ENCODE measurements at regions of chr19 and their contacts with region 1.

Region 1: DNA sequence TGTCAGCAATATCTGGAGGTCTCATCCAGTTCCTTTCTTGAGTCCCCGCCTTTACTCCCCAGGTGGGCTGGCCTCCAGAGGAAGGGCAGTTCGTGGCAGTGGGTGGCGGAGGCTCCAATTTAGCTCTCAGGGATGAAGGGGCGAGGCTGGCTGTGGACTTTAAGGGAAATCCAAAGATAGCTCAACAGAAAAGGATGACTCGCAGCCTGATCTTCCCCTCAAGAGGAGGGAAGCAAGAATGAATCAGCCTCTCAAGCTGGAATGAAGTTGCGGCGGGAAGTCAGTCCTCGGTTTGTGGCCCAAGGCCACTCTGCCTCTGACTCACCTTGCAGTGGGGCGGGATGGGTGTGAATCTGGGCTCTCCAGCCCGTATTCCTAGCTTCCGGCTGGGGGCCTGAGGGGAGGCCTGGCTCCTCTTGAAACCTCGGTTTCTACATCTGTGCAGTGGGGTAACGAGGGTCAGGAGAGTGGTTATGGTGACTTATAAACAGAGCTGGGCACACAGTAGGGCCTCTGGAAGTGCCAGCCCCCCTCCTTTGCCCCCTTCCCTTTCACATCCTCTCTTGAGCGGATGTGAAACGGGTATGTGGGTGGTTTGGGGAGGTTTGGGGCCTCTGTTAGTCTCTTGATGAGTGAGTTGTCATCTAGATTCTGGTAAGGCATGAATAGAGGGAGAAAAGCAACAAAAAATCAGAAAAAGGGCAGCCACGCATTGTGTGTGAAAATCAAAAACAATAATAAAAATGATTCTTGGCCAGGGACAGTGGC is 10.5 kb upstream of the SMG9 start:
- DNase-seq: peak; percentile 31 to 85 (median 60)
- H3K4me3 ChIP-seq: peak overlapping the region; percentile 27
- H3K4me3 Mint-ChIP-seq: peak overlapping the region; percentile 12 to 76 (median 57)
- H3K27ac ChIP-seq: peak overlapping the region; percentile 57
- H3K27ac Mint-ChIP-seq: peak overlapping the region; percentile 84 to 99 (median 90)
- H3K4me1 ChIP-seq: peaks cover 35% of the 10 kb centered on the region
- H3K4me1 Mint-ChIP-seq: peaks cover 35 to 42% (median 36%) of the 10 kb centered on the region in 3 donors
- H3K27me3 ChIP-seq: no peaks in the 10 kb centered on the region
- H3K27me3 Mint-ChIP-seq: peaks cover 0 to 3% of the 10 kb centered on the region in 2 donors

Region 2: DNA sequence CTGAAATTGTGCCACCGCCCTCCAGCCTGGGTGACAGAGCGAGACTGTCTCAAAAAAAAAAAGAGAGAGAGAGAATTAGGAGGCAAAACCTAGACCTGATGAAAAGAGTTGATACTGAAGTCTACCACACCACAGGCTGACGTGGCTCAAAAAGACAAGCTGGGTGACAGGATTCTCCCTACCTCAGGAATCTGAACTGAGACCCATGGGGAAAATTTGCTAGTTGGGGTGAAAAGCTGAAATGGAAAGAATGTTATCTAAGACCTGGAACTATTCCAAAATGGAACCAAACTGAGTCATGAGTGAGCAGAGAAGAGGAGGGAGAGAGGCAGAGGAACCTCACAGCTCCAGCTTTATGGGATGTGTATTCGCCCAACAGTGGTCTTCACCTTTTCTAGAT is 22.3 kb before region 1 on chr19:
- CTCF ChIA-PET with region 1: interaction called, 14 read pairs
- POLR2A ChIA-PET with region 1: no interaction called
- DNase-seq: no peak
- H3K4me3 ChIP-seq: no peak overlapping the region
- H3K4me3 Mint-ChIP-seq: no peak overlapping the region
- H3K27ac ChIP-seq: no peak overlapping the region
- H3K27ac Mint-ChIP-seq: peak overlapping the region in 2 of 8 donors; percentile 60 to 63
- H3K4me1 ChIP-seq: no peaks in the 10 kb centered on the region
- H3K4me1 Mint-ChIP-seq: peaks cover 19 to 26% (median 24%) of the 10 kb centered on the region in 3 donors
- H3K27me3 ChIP-seq: no peaks in the 10 kb centered on the region
- H3K27me3 Mint-ChIP-seq: peaks cover 0 to 2% of the 10 kb centered on the region in 2 donors

Region 3: DNA sequence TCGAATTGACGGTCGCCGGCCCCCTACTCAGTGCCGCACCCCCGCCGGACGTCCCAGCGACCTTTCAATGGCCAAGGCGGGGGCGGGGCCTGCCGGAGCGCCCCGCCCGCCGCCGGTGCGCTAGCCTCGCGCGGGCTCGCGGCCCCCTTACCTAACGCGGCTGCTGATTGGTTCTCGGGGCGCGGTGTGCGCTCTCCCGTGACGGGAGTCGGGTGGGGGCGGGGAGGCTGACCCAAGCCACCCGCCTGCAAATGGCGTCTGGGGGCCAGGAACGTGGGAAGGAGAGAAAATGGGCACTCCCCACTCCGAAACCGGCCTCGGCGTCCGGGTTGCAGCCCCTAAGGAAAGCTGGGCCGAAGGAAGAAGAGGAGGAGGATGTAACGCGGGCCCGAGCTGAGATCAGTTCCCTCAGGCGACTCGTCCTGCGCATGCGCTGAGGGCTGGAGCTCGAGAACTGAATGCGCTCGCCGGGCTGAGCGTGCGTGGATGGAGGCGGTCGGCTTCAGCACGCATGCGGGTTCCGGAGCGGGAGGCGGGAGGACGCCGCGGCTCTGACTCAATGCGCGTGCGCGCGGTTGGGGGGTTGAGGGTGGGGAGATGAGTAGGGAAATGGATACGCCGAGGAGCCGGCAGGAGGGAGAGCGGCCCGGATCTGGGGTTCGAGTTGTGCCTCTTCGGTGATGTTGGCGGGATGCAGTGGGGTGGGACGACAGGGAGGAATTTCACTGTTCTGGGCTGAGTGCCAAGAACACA is 10.6 kb before region 1 on chr19 and contains the start of gene SMG9:
- CTCF ChIA-PET with region 1: interaction called, 27 read pairs
- POLR2A ChIA-PET with region 1: interaction called, 19 read pairs
- DNase-seq: peak; percentile 98 to 99 (median 99)
- H3K4me3 ChIP-seq: peak within 1 kb of the TSS; percentile 99
- H3K4me3 Mint-ChIP-seq: peak within 1 kb of the TSS; percentile 92 to 98 (median 97)
- H3K27ac ChIP-seq: peak within 1 kb of the TSS; percentile 94
- H3K27ac Mint-ChIP-seq: peak within 1 kb of the TSS; percentile 98 to 99 (median 98)
- H3K4me1 ChIP-seq: peaks cover 33% of the 10 kb centered on the region
- H3K4me1 Mint-ChIP-seq: peaks cover 38 to 53% (median 45%) of the 10 kb centered on the region in 3 donors
- H3K27me3 ChIP-seq: no peaks in the 10 kb centered on the region
- H3K27me3 Mint-ChIP-seq: peaks cover 0 to 5% of the 10 kb centered on the region in 2 donors
- total RNA-seq, gene SMG9: 85.8 to 91.3 TPM

Region 4: GRCh38 chr19:43777163-43777700 is 11.9 kb after region 1 on chr19:
- CTCF ChIA-PET with region 1: interaction called, 23 read pairs
- POLR2A ChIA-PET with region 1: interaction called, 3 read pairs
- DNase-seq: peak in 2 of 5 donors; percentile 61 to 64
- H3K4me3 ChIP-seq: peak overlapping the region; percentile 12
- H3K4me3 Mint-ChIP-seq: peak overlapping the region in 6 of 7 donors; percentile 45 to 86 (median 54)
- H3K27ac ChIP-seq: peak overlapping the region; percentile 76
- H3K27ac Mint-ChIP-seq: peak overlapping the region; percentile 45 to 92 (median 84)
- H3K4me1 ChIP-seq: peaks cover 57% of the 10 kb centered on the region
- H3K4me1 Mint-ChIP-seq: peaks cover 45 to 64% (median 52%) of the 10 kb centered on the region in 3 donors
- H3K27me3 ChIP-seq: no peaks in the 10 kb centered on the region
- H3K27me3 Mint-ChIP-seq: peaks cover 0 to 2% of the 10 kb centered on the region in 2 donors

Region 5: GRCh38 chr19:43784981-43785808 is 19.9 kb after region 1 on chr19:
- CTCF ChIA-PET with region 1: interaction called, 23 read pairs
- POLR2A ChIA-PET with region 1: interaction called, 3 read pairs
- DNase-seq: peak in 4 of 5 donors; percentile 40 to 68 (median 58)
- H3K4me3 ChIP-seq: no peak overlapping the region
- H3K4me3 Mint-ChIP-seq: peak overlapping the region; percentile 17 to 93 (median 62)
- H3K27ac ChIP-seq: peak overlapping the region; percentile 54
- H3K27ac Mint-ChIP-seq: peak overlapping the region in 7 of 8 donors; percentile 16 to 94 (median 78)
- H3K4me1 ChIP-seq: peaks cover 31% of the 10 kb centered on the region
- H3K4me1 Mint-ChIP-seq: peaks cover 36 to 45% (median 42%) of the 10 kb centered on the region in 3 donors
- H3K27me3 ChIP-seq: no peaks in the 10 kb centered on the region
- H3K27me3 Mint-ChIP-seq: peaks cover 14% of the 10 kb centered on the region in 2 donors

Measured in CD8-positive, alpha-beta memory T cell (primary cell).